PC-9 (cell line): ENCODE measurements at regions of chr17 and their contacts with region 1.

Region 1: GRCh38 chr17:59641799-59642489 is 22.2 kb downstream of the CLTC start:
- DNase-seq: peak in 1 of 2 experiments; percentile 57
- H3K4me3 ChIP-seq: peak overlapping the region; percentile 9; the same call in 1 of the 2 replicates
- H3K27ac ChIP-seq: peak overlapping the region; percentile 64
- H3K4me1 ChIP-seq: peaks cover 46% of the 10 kb centered on the region
- H3K27me3 ChIP-seq: no peaks in the 10 kb centered on the region
- CTCF ChIP-seq: no peak

Region 2: DNA sequence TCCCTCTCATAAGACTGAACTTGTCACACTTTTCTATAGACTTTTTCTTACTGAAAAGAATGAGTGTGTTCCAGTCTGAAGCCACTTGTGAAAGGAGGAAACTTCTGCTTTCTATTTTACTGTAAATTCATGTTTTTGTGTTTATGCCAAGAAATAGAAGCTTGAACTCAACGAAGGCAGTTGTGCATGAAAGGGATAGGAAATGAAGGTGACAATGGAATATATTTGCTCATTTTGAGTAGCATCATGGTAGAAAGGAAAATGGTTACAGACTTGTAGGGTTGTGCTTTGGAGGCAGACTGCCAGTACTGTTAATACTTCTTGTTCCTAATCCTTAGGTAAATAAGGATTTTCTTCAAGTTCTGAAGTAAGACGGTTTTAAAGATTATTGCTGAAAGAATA is 14.2 kb before region 1 on chr17:
- CTCF ChIA-PET with region 1: no interaction called
- POLR2A ChIA-PET with region 1: interaction called, 12 read pairs
- intact Hi-C with region 1: no loop called
- DNase-seq: no peak
- H3K4me3 ChIP-seq: no peak overlapping the region
- H3K27ac ChIP-seq: no peak overlapping the region
- H3K4me1 ChIP-seq: peaks cover 19% of the 10 kb centered on the region
- H3K27me3 ChIP-seq: no peaks in the 10 kb centered on the region
- CTCF ChIP-seq: no peak

Region 3: DNA sequence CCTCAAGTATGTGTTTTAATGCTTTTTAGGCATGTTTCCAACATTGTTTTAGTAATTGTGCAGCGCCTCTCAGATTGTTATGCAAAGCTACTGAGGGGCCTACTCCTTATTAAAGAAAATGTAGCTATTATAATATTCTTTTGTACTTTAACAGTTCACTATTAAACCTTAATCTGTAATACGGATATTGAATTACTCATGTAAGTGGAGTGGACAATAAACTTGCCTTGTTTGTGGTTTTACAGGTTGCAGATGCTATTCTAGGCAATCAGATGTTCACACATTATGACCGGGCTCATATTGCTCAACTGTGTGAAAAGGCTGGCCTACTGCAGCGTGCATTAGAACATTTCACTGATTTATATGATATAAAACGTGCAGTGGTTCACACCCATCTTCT is 24.3 kb after region 1 on chr17:
- CTCF ChIA-PET with region 1: no interaction called
- POLR2A ChIA-PET with region 1: no interaction called
- intact Hi-C with region 1: no loop called
- DNase-seq: no peak
- H3K4me3 ChIP-seq: no peak overlapping the region
- H3K27ac ChIP-seq: no peak overlapping the region
- H3K4me1 ChIP-seq: no peaks in the 10 kb centered on the region
- H3K27me3 ChIP-seq: no peaks in the 10 kb centered on the region
- CTCF ChIP-seq: no peak

Region 4: GRCh38 chr17:59871471-59871870 is 229.5 kb after region 1 on chr17:
- CTCF ChIA-PET with region 1: interaction called, 18 read pairs
- POLR2A ChIA-PET with region 1: no interaction called
- intact Hi-C with region 1: no loop called
- DNase-seq: no peak
- H3K4me3 ChIP-seq: no peak overlapping the region
- H3K27ac ChIP-seq: 0 out of 2 replicates have a peak overlapping the region, but pooled peaks have one; percentile 4
- H3K4me1 ChIP-seq: peaks cover 8% of the 10 kb centered on the region; the same call in 1 of the 2 replicates
- H3K27me3 ChIP-seq: no peaks in the 10 kb centered on the region
- CTCF ChIP-seq: no peak